CD4-positive, alpha-beta T cell (primary cell): ENCODE measurements at regions of chr15 and their contacts with region 1.

Region 1: DNA sequence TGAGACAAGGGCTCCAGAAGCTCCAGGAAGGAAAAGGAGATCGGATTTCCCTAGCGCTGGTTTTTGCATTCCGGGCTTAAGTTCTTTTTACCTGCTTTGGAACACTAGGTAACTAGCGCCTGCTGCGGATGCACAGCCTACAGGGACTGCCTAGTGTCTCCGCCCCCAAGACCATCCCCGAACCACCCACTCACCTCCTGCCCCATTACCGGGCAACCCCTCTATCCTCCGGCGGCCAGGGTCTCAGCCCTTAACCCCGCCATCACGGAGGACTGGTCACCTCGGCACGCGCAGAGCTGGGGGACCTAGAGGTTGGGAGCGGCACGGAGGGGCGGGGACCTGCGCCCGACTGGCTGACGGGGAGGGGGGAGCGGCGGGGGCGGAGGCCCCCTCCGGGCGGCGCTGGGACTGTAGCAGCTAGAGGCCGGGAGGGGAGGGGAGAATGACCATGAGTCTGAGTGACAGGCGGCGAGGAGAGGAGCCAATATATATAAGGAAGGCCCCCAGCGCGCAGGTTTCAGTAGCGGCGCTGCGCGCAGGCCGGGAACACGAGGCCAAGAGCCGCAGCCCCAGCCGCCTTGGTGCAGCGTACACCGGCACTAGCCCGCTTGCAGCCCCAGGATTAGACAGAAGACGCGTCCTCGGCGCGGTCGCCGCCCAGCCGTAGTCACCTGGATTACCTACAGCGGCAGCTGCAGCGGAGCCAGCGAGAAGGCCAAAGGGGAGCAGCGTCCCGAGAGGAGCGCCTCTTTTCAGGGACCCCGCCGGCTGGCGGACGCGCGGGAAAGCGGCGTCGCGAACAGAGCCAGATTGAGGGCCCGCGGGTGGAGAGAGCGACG is at the start of gene DLL4:
- DNase-seq: peak in 5 of 14 experiments; percentile 36 to 67 (median 48)
- ATAC-seq: peak; percentile 50
- H3K4me3 ChIP-seq: peak within 1 kb of the TSS; percentile 49
- H3K4me3 Mint-ChIP-seq: peak within 1 kb of the TSS; percentile 81
- H3K27ac ChIP-seq: no peak within 1 kb of the TSS
- H3K27ac Mint-ChIP-seq: no peak within 1 kb of the TSS
- H3K4me1 ChIP-seq: peaks cover 64% of the 10 kb centered on the region
- H3K4me1 Mint-ChIP-seq: peaks cover 56% of the 10 kb centered on the region
- H3K27me3 ChIP-seq: peaks cover 67 to 74% of the 10 kb centered on the region in 2 experiments
- H3K27me3 Mint-ChIP-seq: peaks cover 83% of the 10 kb centered on the region
- CTCF ChIP-seq: no peak
- total RNA-seq, gene DLL4: 0.11 to 0.14 TPM

Region 2: DNA sequence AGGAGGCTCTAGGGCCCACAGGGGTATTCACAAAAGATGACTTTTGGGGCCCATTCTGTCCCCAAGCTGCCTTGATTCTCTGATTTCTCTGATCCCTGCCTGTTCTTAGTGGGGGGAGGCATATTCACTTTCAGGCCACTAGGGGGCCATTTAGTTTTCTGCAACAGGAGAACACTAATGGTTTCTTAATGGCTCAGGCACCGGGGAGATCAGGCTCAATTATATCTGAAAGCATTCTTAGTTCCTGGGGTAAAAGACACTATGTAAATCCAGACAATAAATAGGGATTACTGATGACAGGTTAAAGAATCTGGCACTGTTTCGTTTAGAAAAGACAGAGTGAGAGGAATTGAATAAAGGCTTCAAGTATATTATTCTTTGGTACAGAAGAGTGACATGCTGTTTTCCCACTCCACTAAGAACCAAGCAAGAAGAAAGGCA is 608.1 kb before region 1 on chr15:
- CTCF ChIA-PET with region 1: no interaction called
- POLR2A ChIA-PET with region 1: no interaction called
- intact Hi-C with region 1: no loop called
- DNase-seq: peak in 10 of 14 experiments; percentile 31 to 83 (median 51)
- ATAC-seq: peak; percentile 36
- H3K4me3 ChIP-seq: no peak overlapping the region
- H3K4me3 Mint-ChIP-seq: peak overlapping the region; percentile 76
- H3K27ac ChIP-seq: no peak overlapping the region
- H3K27ac Mint-ChIP-seq: peak overlapping the region; percentile 37
- H3K4me1 ChIP-seq: peaks cover 32% of the 10 kb centered on the region
- H3K4me1 Mint-ChIP-seq: peaks cover 35% of the 10 kb centered on the region
- H3K27me3 ChIP-seq: no peaks in the 10 kb centered on the region
- H3K27me3 Mint-ChIP-seq: no peaks in the 10 kb centered on the region
- CTCF ChIP-seq: peak; percentile 91

Region 3: DNA sequence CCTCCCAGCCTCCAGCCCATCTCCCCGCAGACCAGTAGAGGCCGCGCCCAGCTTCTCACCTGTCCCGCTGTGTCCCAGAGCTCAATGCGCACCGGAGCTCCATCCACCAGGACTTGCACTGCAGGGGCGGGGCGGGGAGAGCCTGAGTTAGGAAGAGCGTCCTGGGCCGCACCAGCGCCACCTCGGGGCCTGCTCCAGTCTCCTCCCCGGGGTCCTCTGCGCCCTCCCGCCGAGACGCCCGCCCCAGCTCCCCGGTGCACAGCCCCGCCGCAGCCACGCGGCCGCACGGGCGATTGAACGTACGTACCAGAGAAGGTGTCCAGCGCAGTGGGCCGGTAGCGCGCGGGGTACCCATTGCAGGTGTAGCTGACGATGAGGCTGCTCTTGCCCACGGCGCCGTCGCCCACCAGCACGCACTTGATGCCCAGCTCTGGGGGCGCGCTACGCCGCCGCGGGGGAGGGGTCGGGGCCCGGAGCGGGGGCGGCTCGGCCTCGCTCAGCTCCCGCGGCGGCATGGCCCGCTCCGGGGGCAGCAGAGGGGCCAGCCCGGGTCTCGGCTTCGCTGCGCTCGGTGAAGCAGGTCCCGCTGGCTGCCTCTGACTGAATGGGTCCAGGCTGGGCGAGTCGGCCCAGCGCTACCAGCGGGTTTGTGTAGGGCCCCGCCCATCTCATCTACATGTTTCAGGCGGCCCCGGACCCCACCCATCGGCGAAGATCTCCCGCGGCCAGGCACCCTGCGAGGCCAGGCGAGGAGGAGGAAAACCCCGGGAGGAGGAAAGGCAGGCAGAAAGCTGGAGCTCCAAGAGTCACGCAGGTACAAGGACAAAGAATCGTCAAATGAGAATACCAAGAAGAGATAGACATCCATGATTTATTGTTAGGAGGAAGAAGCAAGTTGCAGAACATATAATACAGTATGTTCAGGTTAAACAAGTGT is 55.1 kb before region 1 on chr15 and contains the start of gene RHOV:
- CTCF ChIA-PET with region 1: no interaction called
- POLR2A ChIA-PET with region 1: no interaction called
- intact Hi-C with region 1: no loop called
- DNase-seq: peak in 13 of 14 experiments; percentile 19 to 73 (median 44)
- ATAC-seq: peak; percentile 87
- H3K4me3 ChIP-seq: peak within 1 kb of the TSS; percentile 53
- H3K4me3 Mint-ChIP-seq: peak within 1 kb of the TSS; percentile 81
- H3K27ac ChIP-seq: no peak within 1 kb of the TSS
- H3K27ac Mint-ChIP-seq: no peak within 1 kb of the TSS
- H3K4me1 ChIP-seq: peaks cover 14% of the 10 kb centered on the region
- H3K4me1 Mint-ChIP-seq: peaks cover 5% of the 10 kb centered on the region
- H3K27me3 ChIP-seq: no peaks in the 10 kb centered on the region
- H3K27me3 Mint-ChIP-seq: no peaks in the 10 kb centered on the region
- CTCF ChIP-seq: no peak
- total RNA-seq, gene RHOV: 0.36 TPM

Region 4: GRCh38 chr15:40912478-40912877 is 16.6 kb before region 1 on chr15:
- CTCF ChIA-PET with region 1: interaction called, 10 read pairs
- POLR2A ChIA-PET with region 1: interaction called, 23 read pairs
- intact Hi-C with region 1: loop called in 1 of 2 experiments (anchors 2 kb)
- DNase-seq: no peak
- ATAC-seq: no peak
- H3K4me3 ChIP-seq: no peak overlapping the region
- H3K4me3 Mint-ChIP-seq: no peak overlapping the region
- H3K27ac ChIP-seq: no peak overlapping the region
- H3K27ac Mint-ChIP-seq: no peak overlapping the region
- H3K4me1 ChIP-seq: peaks cover 8% of the 10 kb centered on the region
- H3K4me1 Mint-ChIP-seq: peaks cover 11% of the 10 kb centered on the region
- H3K27me3 ChIP-seq: no peaks in the 10 kb centered on the region
- H3K27me3 Mint-ChIP-seq: no peaks in the 10 kb centered on the region
- CTCF ChIP-seq: no peak

Region 5: GRCh38 chr15:40941528-40942336 is 12.7 kb after region 1 on chr15:
- CTCF ChIA-PET with region 1: interaction called, 43 read pairs
- POLR2A ChIA-PET with region 1: interaction called, 49 read pairs
- intact Hi-C with region 1: loop called in 1 of 2 experiments (anchors 2 kb)
- DNase-seq: peak; percentile 24 to 85 (median 62)
- ATAC-seq: peak; percentile 62
- H3K4me3 ChIP-seq: peak overlapping the region; percentile 80
- H3K4me3 Mint-ChIP-seq: peak overlapping the region; percentile 79
- H3K27ac ChIP-seq: peak overlapping the region; percentile 51 to 58
- H3K27ac Mint-ChIP-seq: peak overlapping the region; percentile 69
- H3K4me1 ChIP-seq: peaks cover 38% of the 10 kb centered on the region
- H3K4me1 Mint-ChIP-seq: peaks cover 31% of the 10 kb centered on the region
- H3K27me3 ChIP-seq: no peaks in the 10 kb centered on the region
- H3K27me3 Mint-ChIP-seq: no peaks in the 10 kb centered on the region
- CTCF ChIP-seq: no peak

Region 6: DNA sequence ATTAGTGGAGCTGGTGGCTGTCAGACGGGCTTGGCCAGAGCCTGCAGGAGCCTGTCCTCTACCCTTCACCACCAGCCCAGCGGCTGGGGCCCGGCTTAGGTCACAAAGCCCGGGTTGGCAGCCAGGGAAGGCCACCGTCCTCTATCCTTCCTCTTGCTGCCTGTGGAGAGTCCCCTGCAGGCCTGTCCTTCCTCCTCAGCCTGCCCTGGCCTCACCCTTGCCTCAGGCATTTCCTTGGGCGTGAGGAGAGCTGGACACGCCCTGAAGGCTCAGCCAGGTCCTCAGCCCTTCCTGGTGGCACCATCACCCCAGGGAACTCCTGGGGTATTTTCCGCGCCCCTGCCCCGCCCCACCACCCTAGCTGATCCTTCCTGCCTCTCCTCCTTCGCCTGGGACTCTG is 31.9 kb after region 1 on chr15:
- CTCF ChIA-PET with region 1: no interaction called
- POLR2A ChIA-PET with region 1: no interaction called
- intact Hi-C with region 1: no loop called
- DNase-seq: no peak
- ATAC-seq: no peak
- H3K4me3 ChIP-seq: no peak overlapping the region
- H3K4me3 Mint-ChIP-seq: no peak overlapping the region
- H3K27ac ChIP-seq: no peak overlapping the region
- H3K27ac Mint-ChIP-seq: no peak overlapping the region
- H3K4me1 ChIP-seq: no peaks in the 10 kb centered on the region
- H3K4me1 Mint-ChIP-seq: no peaks in the 10 kb centered on the region
- H3K27me3 ChIP-seq: no peaks in the 10 kb centered on the region
- H3K27me3 Mint-ChIP-seq: peaks cover 4% of the 10 kb centered on the region
- CTCF ChIP-seq: no peak

Region 7: GRCh38 chr15:40999190-40999589 is 70.2 kb after region 1 on chr15:
- CTCF ChIA-PET with region 1: no interaction called
- POLR2A ChIA-PET with region 1: no interaction called
- intact Hi-C with region 1: no loop called
- DNase-seq: no peak
- ATAC-seq: no peak
- H3K4me3 ChIP-seq: no peak overlapping the region
- H3K4me3 Mint-ChIP-seq: no peak overlapping the region
- H3K27ac ChIP-seq: no peak overlapping the region
- H3K27ac Mint-ChIP-seq: no peak overlapping the region
- H3K4me1 ChIP-seq: no peaks in the 10 kb centered on the region
- H3K4me1 Mint-ChIP-seq: no peaks in the 10 kb centered on the region
- H3K27me3 ChIP-seq: no peaks in the 10 kb centered on the region
- H3K27me3 Mint-ChIP-seq: no peaks in the 10 kb centered on the region
- CTCF ChIP-seq: no peak